ENCODE measurements at regions of chr22 and their contacts with region 1.

Region 1: GRCh38 chr22:35921777-35922176 is 106.8 kb downstream of the RBFOX2 start:
- DNase-seq: peak; percentile 87
- H3K4me3 ChIP-seq: no peak overlapping the region
- H3K27ac ChIP-seq: peak overlapping the region; percentile 27
- H3K4me1 ChIP-seq: peaks cover 32% of the 10 kb centered on the region
- H3K27me3 ChIP-seq: no peaks in the 10 kb centered on the region
- CTCF ChIP-seq: peak; percentile 46 to 74

Region 2: DNA sequence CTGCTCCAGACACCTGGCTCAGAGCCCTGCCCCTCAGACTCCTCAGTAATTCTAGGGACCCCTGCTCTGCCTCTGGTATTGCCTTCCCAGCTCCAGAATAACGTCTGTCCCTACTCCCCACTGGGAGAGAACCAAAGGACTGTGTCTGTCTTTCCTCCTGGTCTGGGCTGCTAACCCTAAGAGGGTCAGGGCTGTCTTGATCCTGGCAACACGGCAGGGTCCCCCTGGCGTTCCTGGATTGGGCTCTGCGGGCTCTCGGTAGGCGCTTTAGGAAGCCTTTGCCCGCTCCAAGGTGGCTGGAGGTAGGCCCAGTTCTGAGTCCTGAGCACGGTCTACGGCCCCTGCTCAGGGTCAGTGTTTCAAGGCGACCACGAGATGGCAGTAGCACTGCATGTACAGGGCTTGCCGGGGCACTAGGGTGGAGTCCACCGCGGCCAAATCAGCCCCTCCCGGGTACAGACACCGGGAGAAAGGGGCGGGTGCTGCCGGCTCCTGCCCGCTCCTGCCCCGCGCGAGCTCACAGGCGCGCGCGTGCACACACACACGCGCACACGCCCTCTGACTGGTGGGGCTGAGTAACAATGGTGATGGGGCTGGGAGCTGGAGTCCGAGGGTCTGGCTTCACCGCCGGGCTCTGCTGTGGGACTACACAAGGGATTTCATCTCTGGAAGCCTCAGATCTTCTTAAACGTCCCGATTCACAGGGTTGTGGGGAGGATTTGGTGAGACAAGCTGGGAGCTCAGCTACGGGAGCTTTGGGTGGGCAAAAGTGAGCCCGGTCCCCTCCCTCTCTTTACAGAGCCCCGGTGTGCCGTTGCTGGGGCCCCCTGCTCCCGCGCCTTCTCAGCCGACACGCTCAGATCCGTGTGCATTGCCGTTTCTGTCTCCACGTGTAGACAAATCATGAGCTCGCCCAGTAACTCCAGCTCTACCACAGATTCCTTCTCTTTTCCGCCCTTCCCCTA is 571.0 kb before region 1 on chr22:
- CTCF ChIA-PET with region 1: no interaction called
- dilution Hi-C with region 1: no loop called
- in situ Hi-C with region 1: no loop called
- intact Hi-C with region 1: loop called (anchors 2 kb)
- DNase-seq: peak; percentile 84
- H3K4me3 ChIP-seq: peak overlapping the region; percentile 50 to 52 (median 51)
- H3K27ac ChIP-seq: peak overlapping the region; percentile 47
- H3K4me1 ChIP-seq: peaks cover 8% of the 10 kb centered on the region
- H3K27me3 ChIP-seq: no peaks in the 10 kb centered on the region
- CTCF ChIP-seq: peak; percentile 71 to 82

Region 3: GRCh38 chr22:35761037-35761436 is 160.7 kb before region 1 on chr22:
- CTCF ChIA-PET with region 1: no interaction called
- dilution Hi-C with region 1: no loop called
- in situ Hi-C with region 1: no loop called
- intact Hi-C with region 1: loop called (anchors 5 kb)
- DNase-seq: no peak
- H3K4me3 ChIP-seq: no peak overlapping the region
- H3K27ac ChIP-seq: no peak overlapping the region
- H3K4me1 ChIP-seq: no peaks in the 10 kb centered on the region
- H3K27me3 ChIP-seq: no peaks in the 10 kb centered on the region
- CTCF ChIP-seq: peak; percentile 8 to 31

Measured in mammary epithelial cell (primary cell).